Mammary epithelial cell (primary cell): ENCODE measurements at regions of chr22 and their contacts with region 1.

Region 1: GRCh38 chr22:45984316-45984916 is 7.5 kb upstream of the WNT7B start:
- DNase-seq: no peak
- H3K4me3 ChIP-seq: no peak overlapping the region
- H3K27ac ChIP-seq: no peak overlapping the region
- H3K4me1 ChIP-seq: no peaks in the 10 kb centered on the region
- H3K27me3 ChIP-seq: no peaks in the 10 kb centered on the region
- CTCF ChIP-seq: no peak

Region 2: GRCh38 chr22:45584121-45584570 is 400.3 kb before region 1 on chr22:
- CTCF ChIA-PET with region 1: no interaction called
- dilution Hi-C with region 1: loop called (anchors 10 kb)
- in situ Hi-C with region 1: loop called in 1 of 2 experiments (anchors 5 kb)
- intact Hi-C with region 1: no loop called
- DNase-seq: no peak
- H3K4me3 ChIP-seq: no peak overlapping the region
- H3K27ac ChIP-seq: no peak overlapping the region
- H3K4me1 ChIP-seq: peaks cover 3% of the 10 kb centered on the region
- H3K27me3 ChIP-seq: no peaks in the 10 kb centered on the region
- CTCF ChIP-seq: no peak

Region 3: GRCh38 chr22:45896261-45896951 is 88.0 kb before region 1 on chr22:
- CTCF ChIA-PET with region 1: no interaction called
- dilution Hi-C with region 1: no loop called
- in situ Hi-C with region 1: no loop called
- intact Hi-C with region 1: no loop called
- DNase-seq: peak; percentile 75
- H3K4me3 ChIP-seq: no peak overlapping the region
- H3K27ac ChIP-seq: no peak overlapping the region
- H3K4me1 ChIP-seq: peaks cover 10% of the 10 kb centered on the region
- H3K27me3 ChIP-seq: no peaks in the 10 kb centered on the region
- CTCF ChIP-seq: no peak